Posterior vena cava (tissue), 2 donors: ENCODE measurements at regions of chr20 and their contacts with region 1.

Region 1: DNA sequence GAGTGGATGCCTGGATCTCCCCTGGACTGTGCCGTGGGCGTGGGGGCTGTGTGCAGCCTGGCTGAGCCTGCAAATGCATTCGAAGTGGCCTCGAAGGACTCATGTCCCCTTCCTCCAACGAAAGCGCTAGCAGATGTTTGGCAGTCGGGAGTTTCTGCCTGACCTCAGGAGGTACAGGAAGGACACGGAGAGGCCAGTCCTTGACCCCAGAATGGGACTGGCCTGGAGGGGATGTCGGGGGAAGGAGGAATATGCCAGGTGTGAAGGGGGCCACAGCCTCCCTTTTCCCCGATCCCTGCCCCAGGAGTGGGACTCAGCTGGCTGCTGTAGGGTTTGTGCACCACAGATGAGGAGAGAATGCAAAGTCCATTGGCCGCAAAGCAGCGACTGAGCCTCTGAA is 45.6 kb downstream of the APCDD1L start:
- DNase-seq: no peak

Region 2: GRCh38 chr20:58500256-58500655 is 30.6 kb after region 1 on chr20:
- intact Hi-C with region 1: loop called in 1 of 2 experiments (anchors 1 kb)
- DNase-seq: peak; percentile 60